ENCODE measurements at regions of chr1 and their contacts with region 1.

Region 1: GRCh38 chr1:20640183-20640597 is 6.9 kb downstream of the PINK1 start:
- DNase-seq: peak; percentile 89
- H3K4me3 Mint-ChIP-seq: no peak overlapping the region
- H3K27ac Mint-ChIP-seq: no peak overlapping the region
- H3K4me1 Mint-ChIP-seq: no peaks in the 10 kb centered on the region
- H3K27me3 Mint-ChIP-seq: no peaks in the 10 kb centered on the region

Region 2: GRCh38 chr1:20521960-20522861 is 118.0 kb before region 1 on chr1:
- intact Hi-C with region 1: loop called (anchors 1 kb)
- DNase-seq: peak; percentile 91
- H3K4me3 Mint-ChIP-seq: no peak overlapping the region
- H3K27ac Mint-ChIP-seq: no peak overlapping the region
- H3K4me1 Mint-ChIP-seq: peaks cover 3% of the 10 kb centered on the region
- H3K27me3 Mint-ChIP-seq: peaks cover 11% of the 10 kb centered on the region

Region 3: DNA sequence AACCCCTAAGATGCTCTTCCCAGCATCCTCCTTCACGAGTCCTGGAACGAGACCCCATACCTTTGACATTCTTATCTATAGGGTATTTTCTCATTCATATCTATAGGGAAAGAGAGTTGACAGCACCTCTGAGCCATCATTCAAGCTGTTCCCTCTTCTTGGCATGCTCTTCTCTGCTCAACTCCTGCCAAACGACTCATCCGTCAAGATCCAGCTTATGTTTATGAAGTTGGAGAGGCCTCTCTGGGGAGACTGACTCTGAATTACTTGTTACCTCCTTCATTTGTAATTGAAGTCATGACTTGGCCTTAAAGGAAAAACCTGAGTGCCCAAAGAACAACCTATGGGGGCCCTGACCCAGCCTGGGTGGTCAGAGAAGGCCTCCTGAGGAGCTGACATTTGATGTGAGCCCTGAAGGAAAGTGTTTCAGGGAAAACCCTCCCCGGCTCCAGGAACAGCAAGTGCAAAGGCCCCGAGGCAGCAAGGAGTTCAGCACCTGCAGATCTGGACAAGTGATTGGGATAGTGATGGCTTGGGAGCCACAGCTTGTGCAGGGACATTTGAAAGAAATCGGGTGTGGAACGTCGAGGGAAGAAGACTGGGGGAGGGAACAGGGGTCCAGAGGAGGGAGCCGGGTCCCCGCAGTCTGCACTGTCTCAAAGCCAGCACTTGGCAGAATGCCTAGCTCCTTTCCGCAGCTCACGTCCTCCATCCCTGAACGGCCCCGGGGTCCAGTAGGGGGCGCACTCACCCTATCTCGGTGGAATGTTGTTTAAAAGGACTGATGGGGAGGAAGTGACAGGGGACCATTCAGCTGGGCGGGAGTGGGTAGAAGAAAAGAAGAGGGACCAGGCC is 65.3 kb before region 1 on chr1:
- intact Hi-C with region 1: loop called (anchors 1 kb)
- DNase-seq: peak; percentile 92
- H3K4me3 Mint-ChIP-seq: no peak overlapping the region
- H3K27ac Mint-ChIP-seq: no peak overlapping the region
- H3K4me1 Mint-ChIP-seq: peaks cover 5% of the 10 kb centered on the region
- H3K27me3 Mint-ChIP-seq: peaks cover 19% of the 10 kb centered on the region